Mammary epithelial cell (primary cell): ENCODE measurements at regions of chr5 and their contacts with region 1.

Region 1: GRCh38 chr5:72138943-72139521 is 31.8 kb downstream of the MAP1B start:
- DNase-seq: peak; percentile 92
- H3K4me3 ChIP-seq: no peak overlapping the region
- H3K27ac ChIP-seq: no peak overlapping the region
- H3K4me1 ChIP-seq: peaks cover 36% of the 10 kb centered on the region
- H3K27me3 ChIP-seq: peaks cover 10% of the 10 kb centered on the region
- CTCF ChIP-seq: no peak

Region 2: GRCh38 chr5:72166070-72166979 is 27.3 kb after region 1 on chr5:
- CTCF ChIA-PET with region 1: no interaction called
- dilution Hi-C with region 1: no loop called
- in situ Hi-C with region 1: no loop called
- intact Hi-C with region 1: loop called (anchors 2 kb)
- DNase-seq: peak; percentile 83
- H3K4me3 ChIP-seq: peak overlapping the region in 1 of 3 experiments; percentile 2
- H3K27ac ChIP-seq: no peak overlapping the region
- H3K4me1 ChIP-seq: peaks cover 15% of the 10 kb centered on the region
- H3K27me3 ChIP-seq: no peaks in the 10 kb centered on the region
- CTCF ChIP-seq: no peak

Region 3: GRCh38 chr5:72210888-72211678 is 72.1 kb after region 1 on chr5:
- CTCF ChIA-PET with region 1: no interaction called
- dilution Hi-C with region 1: no loop called
- in situ Hi-C with region 1: no loop called
- intact Hi-C with region 1: loop called (anchors 2 kb)
- DNase-seq: peak; percentile 78
- H3K4me3 ChIP-seq: no peak overlapping the region
- H3K27ac ChIP-seq: peak overlapping the region; percentile 8
- H3K4me1 ChIP-seq: peaks cover 23% of the 10 kb centered on the region
- H3K27me3 ChIP-seq: no peaks in the 10 kb centered on the region
- CTCF ChIP-seq: no peak

Region 4: GRCh38 chr5:72244862-72245371 is 105.9 kb after region 1 on chr5:
- CTCF ChIA-PET with region 1: no interaction called
- dilution Hi-C with region 1: no loop called
- in situ Hi-C with region 1: loop called in 1 of 2 experiments (anchors 25 kb)
- intact Hi-C with region 1: loop called (anchors 2 kb)
- DNase-seq: no peak
- H3K4me3 ChIP-seq: no peak overlapping the region
- H3K27ac ChIP-seq: no peak overlapping the region
- H3K4me1 ChIP-seq: peaks cover 11% of the 10 kb centered on the region
- H3K27me3 ChIP-seq: no peaks in the 10 kb centered on the region
- CTCF ChIP-seq: peak; percentile 45 to 63

Region 5: GRCh38 chr5:72268753-72269410 is 129.8 kb after region 1 on chr5:
- CTCF ChIA-PET with region 1: interaction called, 3 read pairs
- dilution Hi-C with region 1: no loop called
- in situ Hi-C with region 1: loop called (anchors 10 to 25 kb)
- intact Hi-C with region 1: loop called (anchors 5 kb)
- DNase-seq: peak; percentile 40
- H3K4me3 ChIP-seq: no peak overlapping the region
- H3K27ac ChIP-seq: no peak overlapping the region
- H3K4me1 ChIP-seq: no peaks in the 10 kb centered on the region
- H3K27me3 ChIP-seq: no peaks in the 10 kb centered on the region
- CTCF ChIP-seq: peak; percentile 76 to 83

Region 6: GRCh38 chr5:72307968-72308852 is 169.2 kb after region 1 on chr5:
- CTCF ChIA-PET with region 1: no interaction called
- dilution Hi-C with region 1: no loop called
- in situ Hi-C with region 1: no loop called
- intact Hi-C with region 1: loop called (anchors 2 kb)
- DNase-seq: peak; percentile 97
- H3K4me3 ChIP-seq: peak overlapping the region; percentile 64 to 99 (median 72)
- H3K27ac ChIP-seq: peak overlapping the region; percentile 78
- H3K4me1 ChIP-seq: peaks cover 16% of the 10 kb centered on the region
- H3K27me3 ChIP-seq: no peaks in the 10 kb centered on the region
- CTCF ChIP-seq: peak; percentile 60 to 81

Region 7: GRCh38 chr5:72440207-72440638 is 301.2 kb after region 1 on chr5:
- CTCF ChIA-PET with region 1: no interaction called
- dilution Hi-C with region 1: no loop called
- in situ Hi-C with region 1: no loop called
- intact Hi-C with region 1: no loop called
- DNase-seq: no peak
- H3K4me3 ChIP-seq: no peak overlapping the region
- H3K27ac ChIP-seq: no peak overlapping the region
- H3K4me1 ChIP-seq: peaks cover 25% of the 10 kb centered on the region
- H3K27me3 ChIP-seq: no peaks in the 10 kb centered on the region
- CTCF ChIP-seq: no peak